Right lobe of liver (tissue), 6 donors: ENCODE measurements at regions of chr22 and their contacts with region 1.

Region 1: GRCh38 chr22:30262917-30263741 is 3.5 kb downstream of the OSM start:
- DNase-seq: peak; percentile 71 to 78 (median 78)
- ATAC-seq: peak; percentile 47 to 71 (median 52)
- H3K4me3 ChIP-seq: peak overlapping the region in 2 of 3 donors; percentile 20 to 24
- H3K27ac ChIP-seq: no peak overlapping the region
- H3K4me1 ChIP-seq: no peaks in the 10 kb centered on the region
- H3K27me3 ChIP-seq: no peaks in the 10 kb centered on the region
- CTCF ChIP-seq: peak; percentile 93 to 99 (median 97)
- POLR2A ChIP-seq: no peak

Region 2: DNA sequence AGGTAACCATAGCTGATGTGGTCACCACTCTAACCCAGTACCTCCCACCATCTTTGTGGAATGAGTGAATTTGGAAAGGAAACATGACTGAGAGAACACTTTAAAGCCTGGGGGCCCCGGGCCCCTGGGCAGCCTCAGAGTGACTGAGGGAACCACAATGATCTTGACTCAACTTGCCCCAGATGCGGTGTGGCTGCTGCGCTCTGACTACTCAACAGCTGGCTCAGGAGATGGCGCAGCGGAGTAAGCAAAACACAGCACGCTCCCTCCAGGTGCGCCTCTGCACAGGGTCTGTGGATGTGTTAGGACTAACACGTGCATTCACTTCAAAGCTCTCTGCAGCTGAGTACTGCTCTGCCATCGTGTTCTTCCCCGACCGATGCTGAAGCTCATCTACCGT is 118.1 kb after region 1 on chr22:
- intact Hi-C with region 1: loop called (anchors 5 to 10 kb)
- DNase-seq: no peak
- ATAC-seq: no peak
- H3K4me3 ChIP-seq: no peak overlapping the region
- H3K27ac ChIP-seq: no peak overlapping the region
- H3K4me1 ChIP-seq: peaks cover 0 to 2% (median 0%) of the 10 kb centered on the region in 4 donors
- H3K27me3 ChIP-seq: no peaks in the 10 kb centered on the region
- CTCF ChIP-seq: no peak
- POLR2A ChIP-seq: no peak

Region 3: GRCh38 chr22:30667494-30668385 is 404.6 kb after region 1 on chr22 and contains the start of gene DUSP18:
- intact Hi-C with region 1: no loop called
- DNase-seq: peak; percentile 96 to 97 (median 97)
- ATAC-seq: peak; percentile 98 to 100 (median 98)
- H3K4me3 ChIP-seq: peak within 1 kb of the TSS; percentile 63 to 83 (median 76)
- H3K27ac ChIP-seq: no peak within 1 kb of the TSS
- H3K4me1 ChIP-seq: no peaks in the 10 kb centered on the region
- H3K27me3 ChIP-seq: no peaks in the 10 kb centered on the region
- CTCF ChIP-seq: peak in 3 of 4 donors; percentile 6 to 30 (median 13)
- POLR2A ChIP-seq: no peak
- total RNA-seq, gene DUSP18: 0.97 to 3.1 (median 2.2) TPM